PC-3 (cell line): ENCODE measurements at regions of chr12 and their contacts with region 1.

Region 1: GRCh38 chr12:96061864-96062453 is 26.6 kb upstream of the LTA4H start:
- DNase-seq: peak; percentile 89
- ATAC-seq: peak; percentile 92
- H3K4me3 ChIP-seq: no peak overlapping the region
- H3K27ac ChIP-seq: no peak overlapping the region
- H3K4me1 ChIP-seq: no peaks in the 10 kb centered on the region
- H3K27me3 ChIP-seq: no peaks in the 10 kb centered on the region
- CTCF ChIP-seq: peak; percentile 91

Region 2: GRCh38 chr12:96015672-96016071 is 46.3 kb before region 1 on chr12:
- CTCF ChIA-PET with region 1: interaction called, 6 read pairs
- POLR2A ChIA-PET with region 1: no interaction called
- intact Hi-C with region 1: loop called (anchors 1 kb)
- DNase-seq: peak; percentile 50
- ATAC-seq: peak; percentile 89
- H3K4me3 ChIP-seq: no peak overlapping the region
- H3K27ac ChIP-seq: no peak overlapping the region
- H3K4me1 ChIP-seq: no peaks in the 10 kb centered on the region
- H3K27me3 ChIP-seq: no peaks in the 10 kb centered on the region
- CTCF ChIP-seq: peak; percentile 60

Region 3: DNA sequence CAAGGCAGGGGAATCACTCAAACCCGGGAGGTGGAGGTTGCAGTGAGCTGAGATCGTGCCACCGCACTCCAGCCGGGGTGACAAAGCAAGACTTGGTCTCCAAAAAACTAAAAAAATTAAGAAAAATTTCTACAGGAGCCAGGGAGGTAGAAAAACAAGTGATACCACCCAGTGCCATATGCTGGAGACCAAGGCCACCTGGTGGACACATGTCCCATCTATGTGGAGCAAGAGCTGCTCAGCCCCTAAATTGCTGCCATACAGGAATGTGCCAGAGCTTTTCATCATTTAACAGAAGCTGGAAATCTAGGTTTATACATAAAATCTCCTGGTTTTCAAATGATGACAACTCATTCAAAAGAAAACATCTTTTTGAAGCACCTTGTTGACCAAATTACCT is 70.9 kb after region 1 on chr12:
- CTCF ChIA-PET with region 1: no interaction called
- POLR2A ChIA-PET with region 1: no interaction called
- intact Hi-C with region 1: loop called (anchors 5 kb)
- DNase-seq: peak; percentile 23
- ATAC-seq: peak; percentile 69
- H3K4me3 ChIP-seq: no peak overlapping the region
- H3K27ac ChIP-seq: no peak overlapping the region
- H3K4me1 ChIP-seq: no peaks in the 10 kb centered on the region
- H3K27me3 ChIP-seq: 0 out of 2 replicates have a peak, but pooled peaks cover 3% of the 10 kb centered on the region
- CTCF ChIP-seq: peak; percentile 46; the same call in 1 of the 2 replicates

Region 4: DNA sequence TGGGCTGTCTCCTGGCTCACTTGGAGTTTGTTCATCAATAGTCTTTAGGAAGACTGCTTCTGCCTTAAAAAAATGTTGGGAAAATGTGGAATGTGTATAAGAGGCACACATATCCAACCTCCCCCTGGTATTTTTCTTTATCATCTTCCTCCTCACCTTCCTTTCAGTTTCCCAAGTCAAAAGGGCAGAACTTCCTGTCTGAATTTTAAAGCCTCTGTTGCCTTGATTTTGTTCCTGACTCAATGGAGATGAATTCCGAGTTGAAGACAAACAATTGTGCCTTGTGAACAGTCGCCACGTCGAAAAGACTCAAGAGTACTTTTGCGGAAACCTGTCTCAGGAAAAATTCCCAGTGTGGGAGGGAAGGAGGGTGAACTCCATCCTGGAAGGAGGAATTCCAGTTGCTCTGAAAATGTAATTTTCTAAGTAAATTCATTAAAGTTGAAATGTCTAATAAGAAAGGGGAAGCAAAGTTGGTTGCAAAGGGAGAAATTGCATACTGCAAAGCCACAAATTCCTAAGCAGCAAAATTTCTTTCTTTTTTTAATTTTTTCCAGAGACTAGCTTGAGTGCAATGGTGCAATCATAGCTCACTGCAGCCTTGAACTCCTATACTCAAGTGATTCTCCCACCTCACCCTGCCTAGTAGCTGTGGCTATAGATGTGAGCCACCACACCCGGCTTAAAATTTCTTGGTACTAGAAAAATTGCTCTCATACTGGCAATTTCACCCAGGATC is 82.0 kb after region 1 on chr12:
- CTCF ChIA-PET with region 1: no interaction called
- POLR2A ChIA-PET with region 1: no interaction called
- intact Hi-C with region 1: no loop called
- DNase-seq: no peak
- ATAC-seq: no peak
- H3K4me3 ChIP-seq: no peak overlapping the region
- H3K27ac ChIP-seq: no peak overlapping the region
- H3K4me1 ChIP-seq: no peaks in the 10 kb centered on the region
- H3K27me3 ChIP-seq: no peaks in the 10 kb centered on the region
- CTCF ChIP-seq: no peak

Region 5: GRCh38 chr12:96194971-96195844 is 133.2 kb after region 1 on chr12:
- CTCF ChIA-PET with region 1: interaction called, 8 read pairs
- POLR2A ChIA-PET with region 1: no interaction called
- intact Hi-C with region 1: loop called (anchors 5 kb)
- DNase-seq: peak; percentile 83
- ATAC-seq: peak; percentile 42
- H3K4me3 ChIP-seq: peak overlapping the region; percentile 96
- H3K27ac ChIP-seq: peak overlapping the region; percentile 98
- H3K4me1 ChIP-seq: peaks cover 37% of the 10 kb centered on the region
- H3K27me3 ChIP-seq: no peaks in the 10 kb centered on the region
- CTCF ChIP-seq: no peak

Region 6: GRCh38 chr12:96516472-96517430 is 454.8 kb after region 1 on chr12:
- CTCF ChIA-PET with region 1: no interaction called
- POLR2A ChIA-PET with region 1: no interaction called
- intact Hi-C with region 1: loop called (anchors 1 kb)
- DNase-seq: peak; percentile 91
- ATAC-seq: peak; percentile 69
- H3K4me3 ChIP-seq: peak overlapping the region; percentile 46
- H3K27ac ChIP-seq: no peak overlapping the region
- H3K4me1 ChIP-seq: peaks cover 10% of the 10 kb centered on the region; the same call in 1 of the 2 replicates
- H3K27me3 ChIP-seq: no peaks in the 10 kb centered on the region
- CTCF ChIP-seq: peak; percentile 88